GM12878 (cell line): ENCODE measurements at regions of chr7 and their contacts with region 1.

Region 1: GRCh38 chr7:1940402-1940786 is 270.3 kb downstream of the ELFN1 start:
- DNase-seq: peak; percentile 55
- ATAC-seq: peak; percentile 98
- H3K4me3 ChIP-seq: peak overlapping the region; percentile 56
- H3K27ac ChIP-seq: peak overlapping the region; percentile 71
- H3K4me1 ChIP-seq: peaks cover 24% of the 10 kb centered on the region
- H3K27me3 ChIP-seq: no peaks in the 10 kb centered on the region
- CTCF ChIP-seq: no peak
- EP300 ChIP-seq: peak; percentile 31 to 67; a peak in 2 of 4 replicates
- POLR2A ChIP-seq: peak; percentile 77; the same call in 1 of the 2 replicates
- RAD21 ChIP-seq: no peak

Region 2: DNA sequence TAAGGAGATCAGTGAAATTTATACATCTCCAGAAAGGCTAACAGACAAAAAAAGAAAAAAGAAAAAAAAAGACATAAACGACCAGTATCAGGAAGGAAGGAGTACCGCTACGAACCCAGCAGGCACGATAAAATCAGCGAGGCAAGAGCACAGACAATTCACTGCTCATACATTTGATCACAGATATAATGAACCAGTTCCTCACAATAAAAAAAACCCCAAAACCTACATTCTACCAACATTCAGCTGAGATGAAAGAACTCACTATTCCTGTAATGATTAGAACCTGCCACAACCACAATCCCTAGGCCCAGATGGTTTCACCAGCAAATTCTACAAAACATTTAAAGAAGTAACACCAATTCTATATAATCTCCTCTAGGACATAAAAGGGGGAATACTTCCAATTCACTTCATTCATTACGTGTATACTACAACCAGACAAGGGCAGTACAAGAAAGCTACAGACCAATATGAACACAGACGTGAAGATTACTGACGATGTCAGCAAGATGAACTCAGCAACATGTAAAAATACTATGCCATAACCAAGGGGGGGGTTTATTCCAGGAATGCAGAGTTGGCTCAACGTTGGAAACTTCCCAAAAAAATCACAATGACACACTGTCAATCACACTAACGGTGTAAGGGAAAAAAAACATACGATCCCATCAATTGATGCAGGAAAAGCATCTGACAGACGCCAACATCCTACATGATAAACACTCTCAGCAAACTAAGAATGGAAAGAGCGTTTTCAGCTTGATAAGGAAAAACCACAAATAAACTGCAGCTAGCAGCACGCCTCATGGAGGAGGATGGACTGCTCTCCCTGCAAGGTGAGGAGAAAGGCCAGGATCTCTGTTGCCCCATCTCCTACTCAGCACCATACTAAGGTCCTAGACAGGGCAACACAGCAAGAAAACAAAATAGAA is 14.2 kb before region 1 on chr7:
- CTCF ChIA-PET with region 1: interaction called, 4 read pairs
- POLR2A ChIA-PET with region 1: interaction called, 3 read pairs
- RAD21 ChIA-PET with region 1: no interaction called
- SMC1A ChIA-PET with region 1: interaction called, 5 read pairs
- in situ Hi-C with region 1: no loop called
- intact Hi-C with region 1: loop called (anchors 2 kb)
- DNase-seq: no peak
- ATAC-seq: peak; percentile 55
- H3K4me3 ChIP-seq: no peak overlapping the region
- H3K27ac ChIP-seq: no peak overlapping the region
- H3K4me1 ChIP-seq: peaks cover 3% of the 10 kb centered on the region; the same call in 1 of the 2 replicates
- H3K27me3 ChIP-seq: no peaks in the 10 kb centered on the region
- CTCF ChIP-seq: no peak
- EP300 ChIP-seq: no peak
- POLR2A ChIP-seq: no peak
- RAD21 ChIP-seq: no peak

Region 3: GRCh38 chr7:1951159-1951536 is 10.8 kb after region 1 on chr7:
- CTCF ChIA-PET with region 1: no interaction called
- POLR2A ChIA-PET with region 1: no interaction called
- RAD21 ChIA-PET with region 1: no interaction called
- SMC1A ChIA-PET with region 1: no interaction called
- in situ Hi-C with region 1: no loop called
- intact Hi-C with region 1: no loop called
- DNase-seq: no peak
- ATAC-seq: no peak
- H3K4me3 ChIP-seq: no peak overlapping the region
- H3K27ac ChIP-seq: no peak overlapping the region
- H3K4me1 ChIP-seq: no peaks in the 10 kb centered on the region
- H3K27me3 ChIP-seq: no peaks in the 10 kb centered on the region
- CTCF ChIP-seq: no peak
- EP300 ChIP-seq: no peak
- POLR2A ChIP-seq: no peak
- RAD21 ChIP-seq: no peak